Activated CD4-positive, alpha-beta memory T cell treated with anti-CD3 and anti-CD28 coated beads for 36 hours (primary cell): ENCODE measurements at regions of chr1 and their contacts with region 1.

Region 1: DNA sequence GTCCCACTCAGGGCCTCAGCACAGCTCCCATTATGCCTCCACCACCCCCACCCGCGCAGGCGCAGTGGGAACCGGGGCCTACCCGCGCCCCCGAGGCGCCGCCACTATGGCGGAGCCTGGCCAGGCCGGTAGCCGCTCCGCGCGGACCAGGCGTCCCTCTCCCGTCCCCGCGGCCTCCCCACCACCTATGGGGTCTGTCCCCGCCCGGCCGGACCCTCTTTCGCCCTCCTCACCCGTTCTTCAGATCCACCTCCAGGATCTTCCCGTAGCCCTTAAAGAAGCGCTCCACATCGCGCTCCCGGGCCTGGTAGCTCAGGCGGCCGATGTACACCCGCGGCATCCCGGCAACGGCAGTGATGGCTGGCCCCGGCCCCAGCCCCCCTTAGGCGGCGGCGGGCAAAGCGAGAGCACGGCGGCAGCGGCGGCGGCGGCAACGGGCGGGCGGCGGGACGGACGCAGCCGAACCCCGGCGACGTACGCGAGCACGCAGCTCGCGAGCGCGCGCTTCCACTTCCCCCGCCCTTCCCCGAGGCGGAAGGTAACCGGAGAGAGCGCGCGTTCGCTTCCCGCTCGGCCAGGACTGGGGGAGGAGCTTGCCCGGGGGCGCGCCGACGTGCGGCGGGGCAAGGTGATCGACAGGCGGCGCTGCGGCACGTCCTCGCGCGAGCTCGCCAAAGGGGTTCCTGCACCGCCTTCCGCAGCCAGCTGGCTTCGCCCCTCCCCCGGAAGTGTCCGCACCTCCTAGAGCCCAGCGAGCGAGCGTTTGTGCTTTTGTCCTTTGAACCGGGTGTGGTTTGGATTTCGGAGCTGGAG is at the start of gene SRSF4:
- DNase-seq: peak; percentile 99
- H3K4me3 Mint-ChIP-seq: peak within 1 kb of the TSS; percentile 98
- H3K27ac Mint-ChIP-seq: peak within 1 kb of the TSS; percentile 98
- H3K4me1 Mint-ChIP-seq: peaks cover 44% of the 10 kb centered on the region
- H3K27me3 Mint-ChIP-seq: no peaks in the 10 kb centered on the region
- total RNA-seq, gene SRSF4: 133 to 136 TPM

Region 2: GRCh38 chr1:28329395-28330153 is 852.0 kb before region 1 on chr1:
- CTCF ChIA-PET with region 1: no interaction called
- POLR2A ChIA-PET with region 1: interaction called, 3 read pairs
- intact Hi-C with region 1: loop called (anchors 10 kb)
- DNase-seq: peak; percentile 59
- H3K4me3 Mint-ChIP-seq: peak overlapping the region; percentile 93
- H3K27ac Mint-ChIP-seq: peak overlapping the region; percentile 96
- H3K4me1 Mint-ChIP-seq: peaks cover 28% of the 10 kb centered on the region
- H3K27me3 Mint-ChIP-seq: peaks cover 1% of the 10 kb centered on the region

Region 3: DNA sequence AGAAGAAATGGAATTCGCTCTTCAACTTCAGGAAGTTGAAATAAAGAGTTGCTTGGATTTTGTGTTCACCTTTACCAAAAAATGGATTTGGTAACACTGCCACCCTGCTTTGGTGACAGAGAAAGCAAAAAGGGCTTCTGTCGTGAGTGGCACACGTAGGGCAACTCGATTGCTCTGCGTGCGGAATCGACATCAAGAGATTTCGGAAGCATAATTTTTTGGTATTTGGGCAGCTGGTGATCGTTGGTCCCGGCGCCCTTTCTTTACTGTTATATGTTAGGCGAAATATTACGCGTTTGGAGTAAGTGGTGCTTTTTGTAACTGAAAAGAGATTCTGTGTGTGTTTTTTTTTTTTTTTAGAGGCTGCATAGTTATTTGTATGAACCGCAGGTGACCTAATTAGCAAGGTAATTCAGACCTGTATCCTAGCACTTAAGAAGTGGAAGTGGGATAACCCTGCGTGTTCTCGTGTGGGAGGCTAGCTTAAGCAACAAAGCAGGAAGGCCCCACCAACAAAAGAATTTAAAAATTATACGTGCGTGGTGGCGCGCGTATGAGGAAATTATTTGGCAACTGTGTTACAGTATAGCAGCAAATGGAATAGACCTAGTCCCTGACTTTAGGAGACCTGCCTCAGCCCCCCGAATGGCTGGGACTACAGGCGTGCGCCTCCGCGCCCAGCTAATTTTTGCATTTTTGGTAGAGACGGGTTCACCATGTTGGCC is 533.0 kb before region 1 on chr1 and contains the start of gene RNU11:
- CTCF ChIA-PET with region 1: interaction called, 3 read pairs
- POLR2A ChIA-PET with region 1: interaction called, 14 read pairs
- intact Hi-C with region 1: loop called (anchors 1 kb)
- DNase-seq: peak; percentile 91
- H3K4me3 Mint-ChIP-seq: peak within 1 kb of the TSS; percentile 93
- H3K27ac Mint-ChIP-seq: peak within 1 kb of the TSS; percentile 99
- H3K4me1 Mint-ChIP-seq: peaks cover 27% of the 10 kb centered on the region
- H3K27me3 Mint-ChIP-seq: no peaks in the 10 kb centered on the region
- total RNA-seq, gene RNU11: not detected

Region 4: DNA sequence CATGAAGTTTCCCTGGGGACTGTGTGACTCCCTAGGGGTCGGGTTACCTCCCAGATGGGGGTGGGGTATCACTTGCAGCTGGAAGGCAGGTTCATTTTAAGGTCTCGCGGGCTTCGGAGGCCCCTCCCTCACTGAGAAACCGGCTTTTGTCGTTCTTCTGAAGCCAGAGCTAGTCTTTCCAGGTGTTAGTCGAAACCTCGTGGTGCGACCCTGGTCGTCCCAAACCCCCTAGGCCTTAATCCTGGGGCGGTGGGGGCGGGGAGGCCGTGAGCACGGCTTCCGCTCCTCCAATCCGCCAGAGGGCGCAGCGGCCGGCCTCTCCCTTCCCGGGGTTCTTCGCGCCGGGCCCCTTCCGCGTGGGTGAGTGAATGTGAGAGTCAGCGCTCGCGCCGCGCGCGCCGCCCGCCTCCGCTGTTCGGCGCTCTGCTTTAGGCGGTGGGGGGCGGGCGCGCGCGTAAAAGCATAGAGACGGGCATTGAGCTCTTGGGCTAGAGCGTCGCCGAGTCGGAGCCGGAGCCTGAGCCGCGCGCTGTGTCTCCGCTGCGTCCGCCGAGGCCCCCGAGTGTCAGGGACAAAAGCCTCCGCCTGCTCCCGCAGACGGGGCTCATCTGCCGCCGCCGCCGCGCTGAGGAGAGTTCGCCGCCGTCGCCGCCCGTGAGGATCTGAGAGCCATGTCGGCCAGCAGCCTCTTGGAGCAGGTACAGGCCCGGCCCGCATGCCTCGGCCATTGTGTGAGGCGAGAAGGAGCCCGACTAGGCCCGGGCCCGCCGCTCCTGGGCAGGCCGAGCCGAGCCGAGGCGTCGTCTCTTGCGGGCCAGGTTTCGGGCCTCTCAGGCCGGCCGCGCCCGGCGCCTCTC is 444.9 kb before region 1 on chr1 and contains the start of gene YTHDF2:
- CTCF ChIA-PET with region 1: interaction called, 10 read pairs
- POLR2A ChIA-PET with region 1: interaction called, 4 read pairs
- intact Hi-C with region 1: loop called (anchors 1 kb)
- DNase-seq: peak; percentile 99
- H3K4me3 Mint-ChIP-seq: peak within 1 kb of the TSS; percentile 83
- H3K27ac Mint-ChIP-seq: peak within 1 kb of the TSS; percentile 85
- H3K4me1 Mint-ChIP-seq: peaks cover 38% of the 10 kb centered on the region
- H3K27me3 Mint-ChIP-seq: no peaks in the 10 kb centered on the region
- total RNA-seq, gene YTHDF2: 74.3 to 80.1 TPM

Region 5: GRCh38 chr1:29124366-29125236 is 57.0 kb before region 1 on chr1:
- CTCF ChIA-PET with region 1: interaction called, 5 read pairs
- POLR2A ChIA-PET with region 1: interaction called, 7 read pairs
- intact Hi-C with region 1: loop called (anchors 5 kb)
- DNase-seq: peak; percentile 74
- H3K4me3 Mint-ChIP-seq: peak overlapping the region; percentile 70
- H3K27ac Mint-ChIP-seq: no peak overlapping the region
- H3K4me1 Mint-ChIP-seq: no peaks in the 10 kb centered on the region
- H3K27me3 Mint-ChIP-seq: peaks cover 18% of the 10 kb centered on the region

Region 6: GRCh38 chr1:29197585-29197924 is 15.9 kb after region 1 on chr1:
- CTCF ChIA-PET with region 1: interaction called, 69 read pairs
- POLR2A ChIA-PET with region 1: interaction called, 19 read pairs
- intact Hi-C with region 1: loop called (anchors 1 kb)
- DNase-seq: peak; percentile 50
- H3K4me3 Mint-ChIP-seq: no peak overlapping the region
- H3K27ac Mint-ChIP-seq: no peak overlapping the region
- H3K4me1 Mint-ChIP-seq: peaks cover 3% of the 10 kb centered on the region
- H3K27me3 Mint-ChIP-seq: no peaks in the 10 kb centered on the region

Region 7: DNA sequence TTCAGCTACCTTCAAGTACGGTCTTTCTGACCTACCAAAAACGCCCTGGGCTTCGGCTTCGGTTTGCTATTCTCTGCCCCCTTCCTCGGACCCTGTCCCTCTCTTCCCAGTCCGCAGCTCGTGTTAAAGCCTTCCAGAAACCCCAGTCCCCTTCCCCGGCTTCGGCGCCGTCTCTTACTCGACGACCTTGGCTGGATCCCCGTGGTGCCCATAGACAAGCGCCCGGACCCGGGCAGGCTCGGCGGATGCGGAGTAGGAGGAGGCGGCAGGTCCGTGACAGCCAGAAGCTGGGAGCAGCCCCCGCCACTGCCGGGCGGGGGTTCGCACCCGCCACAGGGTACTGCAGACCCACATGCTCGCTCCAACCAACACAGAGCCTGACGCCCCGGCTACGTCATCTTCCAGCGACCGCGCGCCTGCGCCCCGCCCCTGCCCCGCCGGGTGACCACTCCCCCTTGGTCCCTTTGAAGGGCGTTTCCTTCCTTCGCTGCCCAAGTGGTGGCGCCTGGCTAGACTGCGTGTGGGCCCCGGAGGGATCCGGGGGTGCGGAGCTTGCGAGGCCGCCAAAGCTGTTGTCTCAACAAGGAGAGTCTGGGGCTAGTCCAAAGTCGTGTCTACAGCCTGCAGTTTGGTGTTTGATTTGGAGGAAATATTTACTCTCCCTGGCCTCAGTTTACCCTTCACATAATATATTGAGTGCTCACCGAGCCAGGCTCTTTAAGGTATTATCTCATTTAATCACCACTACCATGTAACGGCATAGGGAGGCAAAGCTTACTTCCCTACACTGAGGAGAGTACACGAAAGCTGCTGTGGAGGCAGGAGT is 49.1 kb after region 1 on chr1 and contains the start of gene MECR:
- CTCF ChIA-PET with region 1: interaction called, 3 read pairs
- POLR2A ChIA-PET with region 1: interaction called, 8 read pairs
- intact Hi-C with region 1: loop called (anchors 5 kb)
- DNase-seq: peak; percentile 98
- H3K4me3 Mint-ChIP-seq: peak within 1 kb of the TSS; percentile 93
- H3K27ac Mint-ChIP-seq: peak within 1 kb of the TSS; percentile 71
- H3K4me1 Mint-ChIP-seq: peaks cover 15% of the 10 kb centered on the region
- H3K27me3 Mint-ChIP-seq: peaks cover 9% of the 10 kb centered on the region
- total RNA-seq, gene MECR: 34.7 to 37.2 TPM